ENCODE measurements at regions of chr2 and their contacts with region 1.

Region 1: DNA sequence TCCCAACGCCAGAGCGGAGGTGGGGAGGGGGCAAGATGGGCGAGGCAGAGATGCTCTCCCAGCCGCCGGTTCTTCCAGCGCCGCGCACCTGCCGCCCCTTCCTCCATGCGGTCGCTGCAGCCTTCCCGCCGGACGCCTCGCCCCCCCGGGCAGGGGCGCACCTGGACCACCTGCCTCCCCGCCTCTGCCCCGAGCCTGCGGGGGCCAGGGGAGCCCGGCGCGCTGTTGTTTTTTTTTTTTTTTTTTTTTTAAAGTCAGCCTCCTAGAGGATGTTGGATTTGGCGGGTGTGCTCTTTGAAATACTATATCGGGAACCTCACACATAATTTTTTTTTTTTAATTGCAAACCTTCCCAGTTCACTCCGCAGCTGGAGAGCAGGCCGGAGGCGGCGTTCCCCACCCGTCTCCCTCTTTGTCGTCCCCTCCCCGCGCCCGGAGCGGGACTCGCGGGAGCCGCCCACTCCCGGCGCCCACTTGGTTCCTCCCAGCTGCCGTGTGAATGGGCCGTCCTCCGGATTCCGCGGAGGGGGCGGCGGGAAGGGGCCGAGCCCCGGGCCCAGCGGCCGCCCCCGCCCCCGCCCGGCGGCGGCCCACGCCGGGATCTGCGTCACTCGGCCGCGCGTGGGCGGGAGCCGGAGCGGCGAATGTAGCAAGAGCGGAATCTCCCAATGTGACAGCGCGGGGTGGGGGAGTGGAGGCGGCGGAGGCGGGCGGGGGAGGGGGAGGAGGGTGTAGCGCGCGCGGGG is 421 bp upstream of the NAB1 start:
- DNase-seq: peak; percentile 96
- H3K4me3 Mint-ChIP-seq: peak overlapping the region; percentile 72
- H3K27ac Mint-ChIP-seq: peak overlapping the region; percentile 82
- H3K4me1 Mint-ChIP-seq: peaks cover 36% of the 10 kb centered on the region
- H3K27me3 Mint-ChIP-seq: no peaks in the 10 kb centered on the region

Region 2: DNA sequence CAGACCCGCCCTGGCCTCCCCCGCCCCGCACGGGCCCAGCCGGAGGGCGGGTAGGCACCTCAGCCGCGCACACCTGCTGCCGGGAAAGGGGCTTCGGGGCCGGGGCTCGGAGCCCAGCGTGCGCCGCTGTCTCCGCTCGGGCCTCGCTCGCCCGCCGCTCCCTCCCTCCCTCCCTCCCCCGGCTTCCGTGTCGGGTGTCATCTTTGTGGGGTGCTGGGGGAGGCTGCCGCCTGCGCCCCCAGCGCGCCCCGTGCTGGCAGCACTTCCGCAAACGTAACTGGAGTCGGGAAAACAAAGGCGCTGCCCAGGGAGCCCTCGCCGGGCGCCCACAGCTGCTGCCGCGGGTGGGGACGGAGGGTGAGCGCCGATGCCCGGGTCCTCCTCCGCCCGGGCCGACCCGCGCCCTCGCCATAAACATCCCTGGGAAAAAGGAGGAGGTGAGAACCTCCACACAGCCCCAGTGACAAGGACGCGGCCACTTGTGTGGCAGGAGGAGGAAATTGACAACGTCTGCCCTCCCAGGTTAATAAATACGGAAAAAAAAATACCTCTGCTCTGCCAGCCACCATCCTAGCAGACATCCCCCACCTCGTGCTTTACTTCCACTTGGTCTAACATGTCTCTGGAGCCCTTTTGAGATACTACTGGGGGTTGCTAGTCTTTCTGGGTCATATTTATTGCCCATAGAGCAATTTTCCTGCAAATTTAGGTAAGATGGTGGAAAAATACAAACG is 239.8 kb before region 1 on chr2:
- intact Hi-C with region 1: loop called (anchors 2 kb)
- DNase-seq: peak; percentile 91
- H3K4me3 Mint-ChIP-seq: peak overlapping the region; percentile 87
- H3K27ac Mint-ChIP-seq: peak overlapping the region; percentile 94
- H3K4me1 Mint-ChIP-seq: peaks cover 41% of the 10 kb centered on the region
- H3K27me3 Mint-ChIP-seq: no peaks in the 10 kb centered on the region

Region 3: DNA sequence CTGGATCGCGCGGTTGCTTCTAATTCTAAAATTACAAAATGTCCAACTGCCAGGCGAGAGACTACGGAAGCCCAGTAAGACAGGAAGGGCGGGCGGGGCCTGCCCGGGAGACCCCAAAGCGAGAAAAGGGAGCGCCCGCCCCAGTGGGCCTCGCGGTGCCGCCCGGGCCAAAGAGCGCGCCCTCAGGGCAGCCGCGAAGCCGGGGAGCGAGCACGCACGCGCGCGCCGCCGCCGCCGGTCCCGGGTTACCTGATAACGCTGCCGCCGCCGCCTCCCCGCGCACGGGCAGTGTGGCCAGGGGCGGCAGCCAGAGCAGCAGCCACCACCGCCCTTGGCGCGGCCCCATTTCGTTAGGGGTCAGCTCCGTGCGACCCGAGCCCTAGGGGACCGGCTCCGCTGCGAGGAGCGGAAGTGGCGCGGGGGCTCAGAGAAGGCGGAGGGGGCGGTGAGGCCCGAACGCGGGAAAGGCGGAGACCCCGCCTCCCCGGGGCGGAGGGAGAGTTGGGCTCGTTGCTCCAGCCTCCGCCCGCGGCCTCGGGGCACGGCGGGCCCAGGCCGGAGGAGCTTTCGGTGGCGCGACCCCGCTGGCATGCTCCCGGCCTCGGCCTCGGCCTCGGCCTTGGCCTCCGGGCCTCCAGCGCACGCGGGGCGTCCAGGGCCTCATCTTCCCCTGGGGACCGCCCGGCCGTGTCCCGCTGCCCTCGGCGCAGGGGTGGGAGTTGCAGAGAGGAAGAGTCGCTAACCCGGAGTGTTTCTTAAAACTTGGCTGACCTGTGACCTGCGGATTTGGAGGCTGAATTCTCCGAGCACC is 113.9 kb before region 1 on chr2 and contains the start of gene NEMP2:
- intact Hi-C with region 1: loop called (anchors 1 kb)
- DNase-seq: peak; percentile 95
- H3K4me3 Mint-ChIP-seq: peak within 1 kb of the TSS; percentile 93
- H3K27ac Mint-ChIP-seq: peak within 1 kb of the TSS; percentile 99
- H3K4me1 Mint-ChIP-seq: peaks cover 41% of the 10 kb centered on the region
- H3K27me3 Mint-ChIP-seq: no peaks in the 10 kb centered on the region
- total RNA-seq, gene NEMP2: 16.4 and 19.0 TPM in 2 replicates

Region 4: DNA sequence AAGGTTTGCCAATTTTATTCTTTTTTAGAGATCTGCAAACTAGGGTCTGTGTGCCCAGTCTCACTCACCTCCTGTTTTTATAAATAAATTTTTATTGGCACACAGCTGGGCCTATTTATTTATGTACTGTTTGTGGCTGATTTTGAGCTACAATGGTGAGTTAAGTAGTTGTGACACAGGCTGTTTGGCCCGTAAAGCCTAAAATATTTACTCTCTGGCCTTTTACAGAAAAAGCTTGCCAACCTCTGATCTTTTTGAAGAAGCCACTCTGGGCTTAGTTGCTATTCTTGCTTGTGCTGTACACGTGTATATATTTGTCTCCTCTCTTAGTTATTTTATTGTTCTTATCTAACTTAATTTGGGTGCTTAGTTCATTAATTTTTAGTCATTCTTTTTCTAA is 14.9 kb after region 1 on chr2:
- intact Hi-C with region 1: loop called (anchors 2 kb)
- DNase-seq: no peak
- H3K4me3 Mint-ChIP-seq: no peak overlapping the region
- H3K27ac Mint-ChIP-seq: no peak overlapping the region
- H3K4me1 Mint-ChIP-seq: peaks cover 33% of the 10 kb centered on the region
- H3K27me3 Mint-ChIP-seq: no peaks in the 10 kb centered on the region

Region 5: GRCh38 chr2:190695739-190696138 is 47.3 kb after region 1 on chr2:
- intact Hi-C with region 1: loop called (anchors 2 kb)
- DNase-seq: peak; percentile 55
- H3K4me3 Mint-ChIP-seq: no peak overlapping the region
- H3K27ac Mint-ChIP-seq: peak overlapping the region; percentile 64
- H3K4me1 Mint-ChIP-seq: peaks cover 18% of the 10 kb centered on the region
- H3K27me3 Mint-ChIP-seq: no peaks in the 10 kb centered on the region

Region 6: GRCh38 chr2:190763901-190764514 is 115.5 kb after region 1 on chr2:
- intact Hi-C with region 1: loop called (anchors 1 kb)
- DNase-seq: peak; percentile 63
- H3K4me3 Mint-ChIP-seq: peak overlapping the region; percentile 42
- H3K27ac Mint-ChIP-seq: peak overlapping the region; percentile 29
- H3K4me1 Mint-ChIP-seq: peaks cover 41% of the 10 kb centered on the region
- H3K27me3 Mint-ChIP-seq: no peaks in the 10 kb centered on the region

Region 7: DNA sequence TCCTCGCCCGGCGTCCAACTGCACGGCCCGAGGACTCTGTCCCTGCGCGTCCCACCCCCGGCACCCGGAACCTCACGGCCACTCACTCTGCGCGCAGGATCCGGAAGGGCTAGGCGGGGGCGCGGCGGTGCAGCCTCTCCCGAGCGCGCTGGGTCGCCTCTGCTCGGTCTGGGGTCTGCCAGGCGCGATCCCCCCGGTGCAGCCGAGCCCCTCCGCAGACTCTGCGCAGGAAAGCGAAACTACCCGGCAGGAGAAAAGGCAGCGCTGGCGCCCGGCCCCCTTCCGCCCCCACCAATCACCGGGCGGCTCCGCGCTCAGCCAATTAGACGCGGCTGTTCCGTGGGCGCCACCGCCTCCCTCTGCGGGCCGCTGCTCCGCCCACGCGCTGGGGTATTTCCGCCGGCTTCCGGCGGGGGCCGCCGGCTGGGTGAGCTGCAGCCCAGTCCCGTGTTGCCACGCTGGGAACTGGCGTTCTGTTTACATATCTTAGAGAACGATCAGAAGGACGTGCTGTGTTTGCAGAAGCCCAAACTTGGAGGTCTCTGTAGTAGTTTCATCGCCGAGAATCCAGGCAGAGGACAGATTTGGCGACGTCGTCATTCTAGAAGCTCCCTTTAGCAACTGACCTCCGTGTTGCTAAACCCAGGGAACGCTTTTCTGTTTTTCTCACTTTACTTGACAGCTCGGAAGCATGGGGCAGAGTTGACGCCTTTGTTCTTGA is 365.6 kb after region 1 on chr2 and contains the start of gene STAT1:
- intact Hi-C with region 1: loop called (anchors 5 kb)
- DNase-seq: peak; percentile 100
- H3K4me3 Mint-ChIP-seq: no peak within 1 kb of the TSS
- H3K27ac Mint-ChIP-seq: no peak within 1 kb of the TSS
- H3K4me1 Mint-ChIP-seq: peaks cover 37% of the 10 kb centered on the region
- H3K27me3 Mint-ChIP-seq: no peaks in the 10 kb centered on the region
- total RNA-seq, gene STAT1: 152 and 160 TPM in 2 replicates

Region 8: GRCh38 chr2:191401287-191401686 is 752.8 kb after region 1 on chr2:
- intact Hi-C with region 1: no loop called
- DNase-seq: no peak
- H3K4me3 Mint-ChIP-seq: no peak overlapping the region
- H3K27ac Mint-ChIP-seq: no peak overlapping the region
- H3K4me1 Mint-ChIP-seq: peaks cover 4% of the 10 kb centered on the region
- H3K27me3 Mint-ChIP-seq: no peaks in the 10 kb centered on the region

Measured in activated CD4-positive, alpha-beta T cell treated with anti-CD3 and anti-CD28 coated beads, Interleukin-2, amount 10 ng/mL, durations not matched to agents 24 days and 14 days (primary cell).